ENCODE measurements at regions of chrX and their contacts with region 1.

Region 1: GRCh38 chrX:23766650-23767551 is 16.1 kb upstream of the SAT1 start:
- DNase-seq: peak; percentile 50
- H3K4me3 Mint-ChIP-seq: peak overlapping the region; percentile 75
- H3K27ac Mint-ChIP-seq: peak overlapping the region; percentile 89
- H3K4me1 Mint-ChIP-seq: peaks cover 25% of the 10 kb centered on the region
- H3K27me3 Mint-ChIP-seq: no peaks in the 10 kb centered on the region

Region 2: DNA sequence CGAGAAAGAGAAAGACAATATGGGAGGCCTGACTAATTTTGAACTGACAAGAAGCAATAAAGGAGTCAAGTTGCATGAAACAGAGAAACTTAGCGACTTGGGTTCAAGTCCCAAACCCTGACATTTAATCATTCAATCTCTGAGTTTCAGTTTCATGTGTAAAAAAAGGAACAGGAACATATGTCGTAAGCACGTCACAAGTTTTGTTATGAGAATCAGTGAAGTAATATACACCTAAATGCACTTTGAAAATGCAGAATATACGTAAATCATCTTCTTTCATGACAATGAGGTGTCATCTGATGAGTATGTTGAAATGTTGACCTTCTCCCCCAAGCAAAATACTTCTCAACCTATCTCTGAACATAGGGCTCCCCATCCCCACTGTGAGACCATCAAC is 34.2 kb before region 1 on chrX:
- CTCF ChIA-PET with region 1: no interaction called
- POLR2A ChIA-PET with region 1: no interaction called
- DNase-seq: no peak
- H3K4me3 Mint-ChIP-seq: peak overlapping the region; percentile 9
- H3K27ac Mint-ChIP-seq: peak overlapping the region; percentile 81
- H3K4me1 Mint-ChIP-seq: peaks cover 23% of the 10 kb centered on the region
- H3K27me3 Mint-ChIP-seq: no peaks in the 10 kb centered on the region

Region 3: GRCh38 chrX:23782863-23783568 is 16.1 kb after region 1 on chrX and contains the start of gene SAT1:
- CTCF ChIA-PET with region 1: interaction called, 14 read pairs
- POLR2A ChIA-PET with region 1: no interaction called
- DNase-seq: peak; percentile 94
- H3K4me3 Mint-ChIP-seq: peak within 1 kb of the TSS; percentile 95
- H3K27ac Mint-ChIP-seq: peak within 1 kb of the TSS; percentile 98
- H3K4me1 Mint-ChIP-seq: peaks cover 36% of the 10 kb centered on the region
- H3K27me3 Mint-ChIP-seq: no peaks in the 10 kb centered on the region
- total RNA-seq, gene SAT1: 86.3 to 89.7 TPM

Measured in activated CD4-positive, alpha-beta T cell treated with anti-CD3 and anti-CD28 coated beads, Interleukin-2, amount 10 ng/mL, durations not matched to agents 7 days and 5 days (primary cell).